ENCODE measurements at regions of chr19 and their contacts with region 1.

Region 1: GRCh38 chr19:7069042-7069903 is at the start of gene ZNF557:
- DNase-seq: peak; percentile 98
- H3K4me3 Mint-ChIP-seq: peak within 1 kb of the TSS; percentile 85
- H3K27ac Mint-ChIP-seq: peak within 1 kb of the TSS; percentile 90
- H3K4me1 Mint-ChIP-seq: peaks cover 10% of the 10 kb centered on the region
- H3K27me3 Mint-ChIP-seq: no peaks in the 10 kb centered on the region
- CTCF ChIP-seq: no peak
- total RNA-seq, gene ZNF557: 9.6 and 11.8 TPM in 2 replicates

Region 2: GRCh38 chr19:7083076-7083956 is 14.0 kb after region 1 on chr19:
- CTCF ChIA-PET with region 1: no interaction called
- POLR2A ChIA-PET with region 1: interaction called, 13 read pairs
- intact Hi-C with region 1: no loop called
- DNase-seq: peak; percentile 38
- H3K4me3 Mint-ChIP-seq: no peak overlapping the region
- H3K27ac Mint-ChIP-seq: no peak overlapping the region
- H3K4me1 Mint-ChIP-seq: no peaks in the 10 kb centered on the region
- H3K27me3 Mint-ChIP-seq: no peaks in the 10 kb centered on the region
- CTCF ChIP-seq: no peak

Region 3: DNA sequence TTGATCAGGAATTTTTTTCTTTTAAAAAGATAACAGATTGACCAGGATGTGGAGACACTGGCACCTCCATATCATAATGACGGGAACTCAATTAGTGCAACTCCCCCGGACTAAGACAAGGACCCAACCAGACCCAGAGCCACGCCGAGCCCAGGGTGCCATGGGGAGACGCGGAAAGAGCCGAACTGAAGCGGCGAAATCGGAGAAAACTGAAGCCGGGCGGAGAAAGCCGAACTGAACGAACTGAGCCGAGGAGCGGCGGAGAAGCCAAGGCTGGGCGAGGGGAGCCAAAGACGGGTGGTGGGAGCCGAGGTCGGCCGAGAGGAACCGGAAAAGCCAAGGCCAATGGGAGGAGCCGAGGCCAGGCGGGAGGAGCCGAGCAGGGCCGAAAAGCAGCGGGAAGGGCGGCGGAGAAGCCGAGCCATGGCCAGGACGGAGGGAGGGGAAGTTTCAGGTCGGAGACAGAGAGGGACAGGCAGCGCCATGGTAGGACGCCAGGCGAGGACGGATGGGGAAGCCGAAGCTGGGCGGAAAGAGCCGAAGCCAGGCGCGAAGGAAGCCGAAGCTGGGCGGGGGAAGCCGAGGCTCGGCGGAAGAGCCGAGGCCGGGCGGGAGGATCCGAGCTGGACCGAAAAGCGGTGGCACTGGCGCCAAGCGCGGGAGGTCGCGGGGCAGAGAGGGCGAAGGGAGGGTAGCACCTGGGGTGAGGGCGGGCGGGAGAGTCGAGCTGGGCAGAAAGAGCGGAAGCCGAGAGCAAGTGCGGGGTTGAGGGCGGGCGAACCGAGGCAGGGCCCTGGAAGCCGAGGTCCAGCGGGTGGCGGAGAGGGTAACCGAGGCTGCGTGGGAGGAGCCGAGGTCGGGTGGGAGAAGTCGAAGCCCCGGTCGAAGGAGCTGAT is 29.7 kb after region 1 on chr19:
- CTCF ChIA-PET with region 1: no interaction called
- POLR2A ChIA-PET with region 1: interaction called, 13 read pairs
- intact Hi-C with region 1: no loop called
- DNase-seq: peak; percentile 92
- H3K4me3 Mint-ChIP-seq: peak overlapping the region; percentile 99
- H3K27ac Mint-ChIP-seq: peak overlapping the region; percentile 96
- H3K4me1 Mint-ChIP-seq: peaks cover 7% of the 10 kb centered on the region
- H3K27me3 Mint-ChIP-seq: no peaks in the 10 kb centered on the region
- CTCF ChIP-seq: no peak

Region 4: DNA sequence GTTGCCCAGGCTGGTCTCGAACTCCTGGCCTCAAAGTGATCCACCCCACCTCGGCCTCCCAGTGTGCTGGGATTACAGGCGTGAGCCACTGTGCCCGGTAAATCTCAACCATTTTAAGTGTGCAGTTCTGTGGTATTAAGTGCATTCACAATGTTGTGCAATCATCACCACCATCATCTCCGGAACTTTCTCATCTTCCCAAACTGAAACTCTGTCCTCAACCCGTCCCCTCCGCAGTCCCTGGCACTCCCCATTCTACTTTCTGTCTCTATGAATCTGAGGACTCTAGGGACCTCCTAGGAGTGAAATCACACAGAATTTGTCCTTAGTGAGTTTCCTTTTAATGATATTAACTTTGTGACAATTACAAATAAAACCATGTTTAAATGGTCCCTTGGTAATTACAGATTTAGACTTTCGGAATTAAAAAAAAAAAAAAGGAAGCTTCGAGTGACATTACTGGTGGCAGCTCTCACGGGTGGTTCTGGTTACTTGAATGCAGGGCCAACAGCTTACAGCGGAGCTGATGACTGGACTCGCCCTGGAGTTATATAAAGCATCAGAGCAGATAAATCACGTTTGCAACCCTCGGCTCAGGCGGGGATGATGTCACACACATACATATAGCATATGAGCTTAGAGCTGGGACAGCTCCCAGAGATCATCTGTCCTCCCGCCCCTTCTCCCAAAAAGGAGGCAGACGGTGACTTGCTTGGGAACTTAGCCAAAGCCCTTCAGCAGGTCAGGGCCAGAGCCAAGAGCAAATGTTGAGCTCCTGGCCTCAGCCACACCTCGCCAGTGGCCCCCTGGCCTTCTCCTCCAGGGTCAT is 90.0 kb after region 1 on chr19:
- CTCF ChIA-PET with region 1: no interaction called
- POLR2A ChIA-PET with region 1: no interaction called
- intact Hi-C with region 1: no loop called
- DNase-seq: peak; percentile 48
- H3K4me3 Mint-ChIP-seq: no peak overlapping the region
- H3K27ac Mint-ChIP-seq: no peak overlapping the region
- H3K4me1 Mint-ChIP-seq: no peaks in the 10 kb centered on the region
- H3K27me3 Mint-ChIP-seq: no peaks in the 10 kb centered on the region
- CTCF ChIP-seq: no peak